ENCODE measurements at regions of chr16 and their contacts with region 1.

Region 1: GRCh38 chr16:49855280-49855821 is 561 bp downstream of the ZNF423 start:
- DNase-seq: peak; percentile 89 to 96
- ATAC-seq: peak; percentile 74 to 79 (median 75)
- H3K4me3 ChIP-seq: peak overlapping the region; percentile 74
- H3K27ac ChIP-seq: peak overlapping the region; percentile 90
- H3K4me1 ChIP-seq: peaks cover 33% of the 10 kb centered on the region
- H3K27me3 ChIP-seq: no peaks in the 10 kb centered on the region
- CTCF ChIP-seq: no peak

Region 2: GRCh38 chr16:49407873-49408550 is 447.3 kb before region 1 on chr16:
- intact Hi-C with region 1: loop called in 1 of 2 experiments (anchors 5 kb)
- DNase-seq: peak; percentile 86 to 93
- ATAC-seq: peak; percentile 98 to 100 (median 98)
- H3K4me3 ChIP-seq: no peak overlapping the region
- H3K27ac ChIP-seq: no peak overlapping the region
- H3K4me1 ChIP-seq: no peaks in the 10 kb centered on the region
- H3K27me3 ChIP-seq: no peaks in the 10 kb centered on the region
- CTCF ChIP-seq: peak; percentile 94

Region 3: GRCh38 chr16:49556606-49557446 is 298.5 kb before region 1 on chr16:
- intact Hi-C with region 1: loop called in 1 of 2 experiments (anchors 5 kb)
- DNase-seq: no peak
- ATAC-seq: peak in 3 of 4 donors; percentile 32 to 77 (median 59)
- H3K4me3 ChIP-seq: peak overlapping the region; percentile 35
- H3K27ac ChIP-seq: peak overlapping the region; percentile 49
- H3K4me1 ChIP-seq: peaks cover 40% of the 10 kb centered on the region
- H3K27me3 ChIP-seq: no peaks in the 10 kb centered on the region
- CTCF ChIP-seq: peak; percentile 56

Region 4: GRCh38 chr16:49755313-49755620 is 100.1 kb before region 1 on chr16:
- intact Hi-C with region 1: loop called in 1 of 2 experiments (anchors 5 kb)
- DNase-seq: no peak
- ATAC-seq: peak in 2 of 4 donors; percentile 51 to 70
- H3K4me3 ChIP-seq: peak overlapping the region; percentile 50
- H3K27ac ChIP-seq: peak overlapping the region; percentile 63
- H3K4me1 ChIP-seq: peaks cover 16% of the 10 kb centered on the region
- H3K27me3 ChIP-seq: no peaks in the 10 kb centered on the region
- CTCF ChIP-seq: peak; percentile 33

Region 5: DNA sequence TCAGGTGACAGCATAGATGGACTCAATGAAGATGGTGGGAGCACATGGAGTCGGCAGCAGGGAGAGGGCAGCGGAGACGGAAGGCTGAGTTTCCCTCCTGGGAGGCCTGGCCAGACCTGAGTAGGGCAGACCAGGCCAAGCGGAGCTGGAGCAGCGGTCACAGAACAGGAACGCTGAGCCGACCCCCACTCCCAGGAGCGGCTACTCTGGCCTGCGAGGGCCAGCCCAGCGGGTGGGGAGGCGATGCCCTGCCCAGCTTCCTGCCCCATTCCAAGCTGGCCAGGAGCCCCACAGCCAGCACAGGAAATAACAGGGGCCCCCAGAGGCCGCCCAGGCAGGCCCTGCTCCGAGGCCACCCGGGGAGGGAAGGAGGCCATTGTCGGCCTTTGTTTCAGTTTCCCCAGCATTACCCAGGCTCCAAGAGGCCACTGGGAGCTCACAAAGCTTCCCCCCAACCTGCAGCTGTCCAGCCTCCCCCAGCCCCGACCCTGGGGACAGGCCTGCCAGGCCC is 79.2 kb before region 1 on chr16:
- intact Hi-C with region 1: no loop called
- DNase-seq: peak; percentile 36 to 72
- ATAC-seq: peak; percentile 7 to 56 (median 24)
- H3K4me3 ChIP-seq: peak overlapping the region; percentile 28
- H3K27ac ChIP-seq: peak overlapping the region; percentile 15
- H3K4me1 ChIP-seq: peaks cover 50% of the 10 kb centered on the region
- H3K27me3 ChIP-seq: no peaks in the 10 kb centered on the region
- CTCF ChIP-seq: no peak

Region 6: GRCh38 chr16:49837688-49838410 is 17.5 kb before region 1 on chr16:
- intact Hi-C with region 1: loop called in 1 of 2 experiments (anchors 2 kb)
- DNase-seq: no peak
- ATAC-seq: no peak
- H3K4me3 ChIP-seq: peak overlapping the region; percentile 46
- H3K27ac ChIP-seq: peak overlapping the region; percentile 93
- H3K4me1 ChIP-seq: peaks cover 82% of the 10 kb centered on the region
- H3K27me3 ChIP-seq: no peaks in the 10 kb centered on the region
- CTCF ChIP-seq: no peak

Measured in psoas muscle (tissue), 8 donors.